HepG2 (cell line): ENCODE measurements at regions of chr2 and their contacts with region 1.

Region 1: DNA sequence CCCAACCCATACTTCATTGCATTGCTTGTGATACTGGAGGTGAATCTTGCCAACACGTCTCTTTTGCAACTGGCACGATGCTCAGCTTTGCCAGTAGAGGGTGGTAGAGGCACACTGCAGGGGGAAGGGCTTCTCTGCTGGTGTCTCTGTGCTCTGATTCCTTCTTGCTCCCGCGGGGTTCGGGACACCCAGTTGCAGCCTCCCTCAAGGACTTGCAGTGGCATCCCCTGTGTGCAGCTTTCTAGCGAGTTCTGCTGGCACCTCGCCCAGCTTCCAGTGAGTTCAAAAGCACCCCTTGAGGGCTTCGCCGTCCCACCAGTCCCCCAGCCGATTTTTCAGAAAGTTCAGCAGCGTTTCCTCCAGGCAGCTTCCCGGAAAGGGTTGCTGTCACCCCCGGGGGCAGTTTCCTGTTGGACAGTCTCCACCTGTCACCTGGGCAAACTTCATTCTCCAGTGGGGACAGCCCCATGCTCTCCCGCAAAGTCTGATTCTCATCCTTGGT is 35.3 kb upstream of the EN1 start:
- DNase-seq: peak; percentile 59
- ATAC-seq: peak; percentile 90
- H3K4me3 ChIP-seq: peak overlapping the region in 2 of 3 experiments; percentile 17 to 53; a peak in 1 of 6 replicates
- H3K27ac ChIP-seq: no peak overlapping the region
- H3K4me1 ChIP-seq: 0 out of 2 replicates have a peak, but pooled peaks cover 4% of the 10 kb centered on the region
- H3K27me3 ChIP-seq: no peaks in the 10 kb centered on the region
- CTCF ChIP-seq: peak; percentile 91
- EP300 ChIP-seq: no peak
- POLR2A ChIP-seq: no peak
- RAD21 ChIP-seq: peak; percentile 47; the same call in 1 of the 2 replicates

Region 2: GRCh38 chr2:118643294-118643693 is 239.5 kb before region 1 on chr2:
- CTCF ChIA-PET with region 1: no interaction called
- POLR2A ChIA-PET with region 1: no interaction called
- in situ Hi-C with region 1: no loop called
- intact Hi-C with region 1: no loop called
- DNase-seq: no peak
- ATAC-seq: no peak
- H3K4me3 ChIP-seq: no peak overlapping the region
- H3K27ac ChIP-seq: no peak overlapping the region
- H3K4me1 ChIP-seq: no peaks in the 10 kb centered on the region
- H3K27me3 ChIP-seq: no peaks in the 10 kb centered on the region
- CTCF ChIP-seq: no peak
- EP300 ChIP-seq: no peak
- POLR2A ChIP-seq: no peak
- RAD21 ChIP-seq: no peak

Region 3: GRCh38 chr2:119126650-119127049 is 243.9 kb after region 1 on chr2:
- CTCF ChIA-PET with region 1: interaction called, 3 read pairs
- POLR2A ChIA-PET with region 1: no interaction called
- in situ Hi-C with region 1: no loop called
- intact Hi-C with region 1: loop called (anchors 1 kb)
- DNase-seq: peak; percentile 26
- ATAC-seq: peak; percentile 83
- H3K4me3 ChIP-seq: no peak overlapping the region
- H3K27ac ChIP-seq: no peak overlapping the region
- H3K4me1 ChIP-seq: no peaks in the 10 kb centered on the region
- H3K27me3 ChIP-seq: peaks cover 4 to 42% of the 10 kb centered on the region in 2 experiments; a peak in 3 of 5 replicates
- CTCF ChIP-seq: peak; percentile 80
- EP300 ChIP-seq: no peak
- POLR2A ChIP-seq: no peak
- RAD21 ChIP-seq: peak; percentile 40; the same call in 1 of the 2 replicates

Region 4: DNA sequence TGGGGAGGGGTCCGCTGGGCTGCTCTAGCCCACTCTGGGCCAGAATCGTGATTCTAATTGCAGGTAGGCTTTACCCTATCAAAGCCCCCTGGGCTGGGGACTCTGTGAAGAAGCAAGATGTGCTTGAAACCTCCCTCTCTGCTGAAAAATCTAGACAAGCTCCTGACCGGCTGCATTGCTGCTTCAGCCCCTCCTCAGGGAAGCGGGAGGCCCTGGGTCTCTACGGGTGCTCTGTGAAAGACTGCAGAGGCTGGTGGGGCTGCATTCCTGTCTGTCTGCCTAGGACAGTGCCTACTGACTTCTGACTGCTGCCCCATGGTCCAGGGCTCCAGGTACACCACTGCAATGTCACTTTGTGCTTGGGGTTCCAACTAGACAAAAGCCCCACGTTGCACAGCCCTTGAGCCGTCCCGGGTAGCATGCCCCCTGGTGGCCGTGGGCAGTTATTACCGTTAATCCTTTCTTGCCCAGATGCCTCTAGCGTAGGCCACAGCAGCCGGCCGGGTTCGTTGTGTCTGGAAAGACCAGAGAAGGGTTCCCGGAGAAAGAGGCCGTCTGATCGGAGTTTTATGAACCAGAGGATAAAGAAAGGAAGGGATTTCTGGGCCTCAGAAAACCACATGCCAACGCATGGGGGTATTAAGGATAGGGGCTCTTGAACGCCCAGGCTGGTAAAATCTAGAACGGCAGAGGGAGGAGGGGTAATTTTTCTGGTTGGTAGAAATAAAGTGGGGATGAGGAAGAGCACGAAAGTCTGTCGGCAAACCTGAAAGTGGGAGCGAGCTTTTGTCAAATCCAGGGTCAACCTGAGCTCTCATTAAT is 291.7 kb after region 1 on chr2:
- CTCF ChIA-PET with region 1: interaction called, 14 read pairs
- POLR2A ChIA-PET with region 1: no interaction called
- in situ Hi-C with region 1: loop called (anchors 5 kb)
- intact Hi-C with region 1: loop called (anchors 1 kb)
- DNase-seq: peak; percentile 37
- ATAC-seq: peak; percentile 93
- H3K4me3 ChIP-seq: no peak overlapping the region
- H3K27ac ChIP-seq: no peak overlapping the region
- H3K4me1 ChIP-seq: no peaks in the 10 kb centered on the region
- H3K27me3 ChIP-seq: peaks cover 0 to 23% of the 10 kb centered on the region in 2 experiments; a peak in 1 of 5 replicates
- CTCF ChIP-seq: peak; percentile 89
- EP300 ChIP-seq: no peak
- POLR2A ChIP-seq: no peak
- RAD21 ChIP-seq: peak; percentile 68

Region 5: GRCh38 chr2:119311356-119311755 is 428.6 kb after region 1 on chr2:
- CTCF ChIA-PET with region 1: interaction called, 4 read pairs
- POLR2A ChIA-PET with region 1: no interaction called
- in situ Hi-C with region 1: loop called (anchors 10 kb)
- intact Hi-C with region 1: no loop called
- DNase-seq: no peak
- ATAC-seq: peak; percentile 76
- H3K4me3 ChIP-seq: no peak overlapping the region
- H3K27ac ChIP-seq: no peak overlapping the region
- H3K4me1 ChIP-seq: peaks cover 23% of the 10 kb centered on the region
- H3K27me3 ChIP-seq: no peaks in the 10 kb centered on the region
- CTCF ChIP-seq: peak; percentile 50
- EP300 ChIP-seq: no peak
- POLR2A ChIP-seq: no peak
- RAD21 ChIP-seq: no peak